CD8-positive, alpha-beta T cell (primary cell): ENCODE measurements at regions of chr1 and their contacts with region 1.

Region 1: DNA sequence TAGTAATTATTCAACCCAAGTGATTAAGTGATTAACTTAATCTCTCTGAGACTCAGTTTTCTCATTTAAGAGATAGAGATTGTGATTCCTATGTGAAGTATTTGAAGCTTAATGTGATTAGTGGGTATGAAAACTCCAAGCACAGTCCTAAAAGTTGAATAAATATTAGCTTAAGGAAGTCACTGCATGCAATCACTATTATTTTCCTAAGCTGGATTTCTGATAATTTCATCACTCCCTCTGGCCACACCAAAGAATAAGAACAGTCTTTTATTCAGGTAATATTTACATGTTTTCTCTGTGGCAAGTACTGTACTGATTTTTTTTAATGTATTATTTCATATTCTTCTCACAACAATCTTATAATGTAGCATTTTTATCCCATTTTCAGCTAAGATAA is 31.1 kb downstream of the CD55 start:
- DNase-seq: no peak
- ATAC-seq: no peak
- H3K4me3 ChIP-seq: no peak overlapping the region
- H3K4me3 Mint-ChIP-seq: no peak overlapping the region
- H3K27ac ChIP-seq: no peak overlapping the region
- H3K27ac Mint-ChIP-seq: no peak overlapping the region
- H3K4me1 ChIP-seq: peaks cover 61% of the 10 kb centered on the region
- H3K4me1 Mint-ChIP-seq: peaks cover 85% of the 10 kb centered on the region
- H3K27me3 ChIP-seq: no peaks in the 10 kb centered on the region
- H3K27me3 Mint-ChIP-seq: no peaks in the 10 kb centered on the region
- CTCF ChIP-seq: no peak

Region 2: GRCh38 chr1:207336559-207337467 is 15.7 kb before region 1 on chr1:
- CTCF ChIA-PET with region 1: no interaction called
- POLR2A ChIA-PET with region 1: interaction called, 3 read pairs
- intact Hi-C with region 1: loop called in 1 of 2 experiments (anchors 2 kb)
- DNase-seq: peak in 6 of 9 experiments; percentile 17 to 88 (median 52)
- ATAC-seq: peak; percentile 61
- H3K4me3 ChIP-seq: peak overlapping the region in 1 of 2 experiments; percentile 42
- H3K4me3 Mint-ChIP-seq: peak overlapping the region; percentile 59
- H3K27ac ChIP-seq: peak overlapping the region; percentile 37 to 62
- H3K27ac Mint-ChIP-seq: peak overlapping the region; percentile 89
- H3K4me1 ChIP-seq: peaks cover 63% of the 10 kb centered on the region
- H3K4me1 Mint-ChIP-seq: peaks cover 68% of the 10 kb centered on the region
- H3K27me3 ChIP-seq: no peaks in the 10 kb centered on the region
- H3K27me3 Mint-ChIP-seq: no peaks in the 10 kb centered on the region
- CTCF ChIP-seq: no peak